AG04450 (cell line): ENCODE measurements at regions of chr10 and their contacts with region 1.

Region 1: GRCh38 chr10:93859049-93859655 is 34.6 kb upstream of the SLC35G1 start:
- DNase-seq: no peak
- H3K4me3 ChIP-seq: no peak overlapping the region
- H3K27ac ChIP-seq: no peak overlapping the region
- H3K27me3 ChIP-seq: peaks cover 19% of the 10 kb centered on the region
- CTCF ChIP-seq: peak; percentile 47

Region 2: DNA sequence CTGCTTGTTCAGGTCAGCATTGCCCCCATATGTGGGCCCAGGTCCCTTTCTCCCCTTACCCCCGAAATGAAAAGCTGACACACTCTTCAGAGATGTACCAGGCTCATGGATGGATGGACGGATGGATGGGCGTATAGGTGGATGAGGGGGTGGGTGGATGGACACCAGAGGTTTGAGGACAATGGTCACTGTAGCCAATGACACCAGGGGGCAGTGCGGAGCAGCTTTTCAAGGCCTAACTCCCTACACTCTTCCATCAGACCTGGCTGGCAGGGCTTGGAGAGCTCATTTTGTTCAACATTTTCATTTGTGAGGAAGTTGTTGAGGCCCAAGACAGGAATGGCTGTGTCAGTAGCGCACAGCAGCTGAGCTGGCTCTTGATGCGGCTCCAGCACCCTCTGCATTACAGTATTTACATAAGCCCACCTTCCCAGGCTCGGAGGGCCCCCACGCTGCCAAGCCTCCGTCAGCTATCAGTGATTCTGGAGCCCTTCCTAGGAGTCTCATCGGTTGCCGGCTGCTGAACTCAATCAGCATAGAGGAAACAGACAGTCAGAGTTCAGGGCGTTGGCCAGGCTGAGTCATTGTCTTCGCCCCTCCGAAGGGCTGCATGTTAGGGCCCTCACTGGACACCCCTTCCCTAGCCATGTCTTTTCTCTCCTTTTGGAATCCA is 304.3 kb before region 1 on chr10:
- CTCF ChIA-PET with region 1: interaction called, 10 read pairs
- POLR2A ChIA-PET with region 1: no interaction called
- DNase-seq: no peak
- H3K4me3 ChIP-seq: no peak overlapping the region
- H3K27ac ChIP-seq: no peak overlapping the region
- H3K27me3 ChIP-seq: peaks cover 3% of the 10 kb centered on the region
- CTCF ChIP-seq: peak; percentile 66

Region 3: DNA sequence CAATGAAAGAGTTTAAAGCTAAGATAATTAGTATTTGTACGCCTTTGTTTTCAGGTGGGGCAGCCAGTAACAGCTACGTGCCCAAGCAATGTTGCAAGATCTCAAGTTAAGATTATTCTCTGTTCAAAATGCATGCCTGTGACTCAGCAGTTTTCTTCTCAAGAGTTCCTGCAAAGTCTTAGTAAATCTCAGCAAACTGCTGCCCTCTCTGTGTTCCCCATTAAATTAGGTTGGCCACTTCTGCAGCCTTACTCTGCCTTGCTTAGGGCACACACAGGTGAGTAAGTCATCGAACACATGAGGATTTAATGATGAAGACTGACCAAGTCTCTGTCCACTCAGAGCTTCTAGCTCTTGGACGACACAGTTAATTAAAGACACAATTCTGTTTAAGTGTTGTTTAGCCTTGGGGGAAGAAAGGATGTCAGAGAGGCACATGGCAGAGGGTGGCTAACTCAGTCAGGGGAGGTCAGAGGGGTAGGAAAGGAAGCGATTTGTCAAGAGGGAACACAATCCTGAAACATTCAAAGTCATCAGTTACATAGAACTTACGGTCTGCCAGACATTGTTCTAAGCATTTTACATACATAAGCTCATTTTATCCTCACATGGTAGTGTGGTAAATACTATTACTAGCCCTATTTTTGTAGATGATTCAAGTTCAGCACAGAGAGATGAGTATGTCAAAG is 14.4 kb after region 1 on chr10:
- CTCF ChIA-PET with region 1: interaction called, 11 read pairs
- POLR2A ChIA-PET with region 1: no interaction called
- DNase-seq: no peak
- H3K4me3 ChIP-seq: no peak overlapping the region
- H3K27ac ChIP-seq: no peak overlapping the region
- H3K27me3 ChIP-seq: peaks cover 5% of the 10 kb centered on the region
- CTCF ChIP-seq: no peak

Region 4: GRCh38 chr10:94066411-94066810 is 207.3 kb after region 1 on chr10:
- CTCF ChIA-PET with region 1: no interaction called
- POLR2A ChIA-PET with region 1: no interaction called
- DNase-seq: no peak
- H3K4me3 ChIP-seq: no peak overlapping the region
- H3K27ac ChIP-seq: no peak overlapping the region
- H3K27me3 ChIP-seq: no peaks in the 10 kb centered on the region
- CTCF ChIP-seq: no peak